IMR-90 (cell line): ENCODE measurements at regions of chr10 and their contacts with region 1.

Region 1: GRCh38 chr10:26725837-26726727 is 28.6 kb downstream of the PDSS1 start:
- DNase-seq: peak; percentile 67
- ATAC-seq: peak; percentile 81
- H3K4me3 ChIP-seq: no peak overlapping the region
- H3K27ac ChIP-seq: no peak overlapping the region
- H3K4me1 ChIP-seq: no peaks in the 10 kb centered on the region
- H3K27me3 ChIP-seq: no peaks in the 10 kb centered on the region
- CTCF ChIP-seq: peak; percentile 84
- POLR2A ChIP-seq: no peak
- RAD21 ChIP-seq: peak; percentile 85

Region 2: DNA sequence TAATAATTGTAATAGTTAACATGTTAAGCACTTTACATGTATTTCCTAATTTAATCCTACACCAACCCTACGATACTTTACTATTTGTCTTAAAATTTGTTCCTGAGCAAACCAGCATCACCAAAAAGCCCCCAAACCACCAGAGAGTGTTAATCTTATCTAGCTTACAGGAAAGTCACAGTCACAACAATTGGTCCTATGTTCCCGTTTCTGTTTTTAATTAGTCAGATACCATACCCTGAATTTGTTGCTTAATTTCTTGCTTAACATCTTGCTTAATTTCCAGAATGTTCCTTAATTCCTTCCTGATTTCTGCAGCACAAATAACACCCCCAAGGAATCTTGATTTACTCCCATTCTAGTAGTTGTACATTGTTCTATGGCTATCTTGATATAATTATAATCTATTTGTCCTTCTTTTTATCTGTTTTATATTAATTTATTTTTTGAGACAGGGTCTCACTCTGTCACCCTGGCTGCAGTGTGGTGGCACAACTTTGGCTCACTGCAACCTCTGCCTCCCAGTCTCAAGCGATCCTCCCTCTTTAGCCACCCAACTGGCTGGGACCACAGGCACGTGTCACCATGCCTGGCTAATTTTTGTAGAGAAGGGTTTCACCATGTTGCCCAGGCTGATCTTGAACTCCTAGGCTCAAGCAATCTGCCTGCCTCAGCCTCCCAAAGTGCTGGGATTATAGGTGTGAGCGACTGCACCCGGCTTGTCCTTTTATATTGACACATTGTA is 35.2 kb before region 1 on chr10:
- CTCF ChIA-PET with region 1: no interaction called
- POLR2A ChIA-PET with region 1: no interaction called
- dilution Hi-C with region 1: no loop called
- in situ Hi-C with region 1: no loop called
- intact Hi-C with region 1: no loop called
- DNase-seq: no peak
- ATAC-seq: no peak
- H3K4me3 ChIP-seq: no peak overlapping the region
- H3K27ac ChIP-seq: no peak overlapping the region
- H3K4me1 ChIP-seq: no peaks in the 10 kb centered on the region
- H3K27me3 ChIP-seq: no peaks in the 10 kb centered on the region
- CTCF ChIP-seq: no peak
- POLR2A ChIP-seq: no peak
- RAD21 ChIP-seq: no peak

Region 3: GRCh38 chr10:26706206-26706605 is 19.9 kb before region 1 on chr10:
- CTCF ChIA-PET with region 1: interaction called, 10 read pairs
- POLR2A ChIA-PET with region 1: no interaction called
- dilution Hi-C with region 1: no loop called
- in situ Hi-C with region 1: no loop called
- intact Hi-C with region 1: no loop called
- DNase-seq: no peak
- ATAC-seq: no peak
- H3K4me3 ChIP-seq: no peak overlapping the region
- H3K27ac ChIP-seq: no peak overlapping the region
- H3K4me1 ChIP-seq: no peaks in the 10 kb centered on the region
- H3K27me3 ChIP-seq: no peaks in the 10 kb centered on the region
- CTCF ChIP-seq: no peak
- POLR2A ChIP-seq: no peak
- RAD21 ChIP-seq: no peak

Region 4: GRCh38 chr10:26755443-26755903 is 29.4 kb after region 1 on chr10:
- CTCF ChIA-PET with region 1: interaction called, 6 read pairs
- POLR2A ChIA-PET with region 1: no interaction called
- dilution Hi-C with region 1: no loop called
- in situ Hi-C with region 1: no loop called
- intact Hi-C with region 1: loop called (anchors 1 kb)
- DNase-seq: peak; percentile 65
- ATAC-seq: no peak; the same call in 1 of the 2 replicates
- H3K4me3 ChIP-seq: no peak overlapping the region
- H3K27ac ChIP-seq: peak overlapping the region; percentile 81; the same call in 1 of the 2 replicates
- H3K4me1 ChIP-seq: peaks cover 3% of the 10 kb centered on the region
- H3K27me3 ChIP-seq: no peaks in the 10 kb centered on the region
- CTCF ChIP-seq: no peak
- POLR2A ChIP-seq: no peak
- RAD21 ChIP-seq: no peak

Region 5: DNA sequence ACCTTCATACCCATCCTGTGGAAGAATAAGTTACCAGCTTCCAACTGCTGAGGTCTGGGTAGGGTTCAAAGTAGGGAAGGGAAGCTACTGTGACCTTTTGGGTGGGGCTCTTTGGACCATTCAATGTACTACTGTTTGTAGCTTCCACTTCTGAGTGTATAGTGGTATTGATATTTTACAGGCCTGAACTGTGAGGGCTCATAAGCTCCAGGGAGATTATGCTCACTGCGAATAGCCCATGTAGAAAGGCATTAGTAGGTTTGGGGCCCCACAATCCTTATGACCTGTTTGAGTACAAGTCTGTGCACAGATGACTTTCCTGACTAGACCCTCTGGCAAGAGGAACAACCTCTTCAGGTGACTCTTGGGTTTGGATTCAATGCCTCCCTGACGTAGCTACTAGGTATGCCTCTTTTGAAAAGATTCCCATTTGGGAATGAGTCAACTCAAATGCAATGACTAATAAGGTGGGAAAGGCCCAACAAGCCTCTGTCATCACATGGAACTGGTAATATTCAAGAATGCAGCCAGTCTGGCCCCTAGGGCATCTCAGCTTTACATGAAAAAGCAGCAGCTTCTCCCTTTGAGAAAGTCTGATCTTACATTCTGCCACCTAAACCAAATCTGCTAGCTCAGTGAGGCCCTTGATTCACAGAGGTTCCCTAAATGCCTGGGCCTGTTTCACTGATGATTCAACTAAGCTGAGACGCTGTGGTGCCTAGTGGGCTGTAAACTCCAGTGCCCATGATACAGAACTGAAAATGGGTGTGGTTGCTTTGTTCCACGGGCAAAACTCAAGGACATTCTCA is 54.9 kb after region 1 on chr10:
- CTCF ChIA-PET with region 1: interaction called, 10 read pairs
- POLR2A ChIA-PET with region 1: no interaction called
- dilution Hi-C with region 1: no loop called
- in situ Hi-C with region 1: no loop called
- intact Hi-C with region 1: no loop called
- DNase-seq: peak; percentile 95
- ATAC-seq: peak; percentile 87
- H3K4me3 ChIP-seq: no peak overlapping the region
- H3K27ac ChIP-seq: peak overlapping the region; percentile 14; the same call in 1 of the 2 replicates
- H3K4me1 ChIP-seq: peaks cover 8% of the 10 kb centered on the region
- H3K27me3 ChIP-seq: no peaks in the 10 kb centered on the region
- CTCF ChIP-seq: no peak
- POLR2A ChIP-seq: no peak
- RAD21 ChIP-seq: no peak

Region 6: DNA sequence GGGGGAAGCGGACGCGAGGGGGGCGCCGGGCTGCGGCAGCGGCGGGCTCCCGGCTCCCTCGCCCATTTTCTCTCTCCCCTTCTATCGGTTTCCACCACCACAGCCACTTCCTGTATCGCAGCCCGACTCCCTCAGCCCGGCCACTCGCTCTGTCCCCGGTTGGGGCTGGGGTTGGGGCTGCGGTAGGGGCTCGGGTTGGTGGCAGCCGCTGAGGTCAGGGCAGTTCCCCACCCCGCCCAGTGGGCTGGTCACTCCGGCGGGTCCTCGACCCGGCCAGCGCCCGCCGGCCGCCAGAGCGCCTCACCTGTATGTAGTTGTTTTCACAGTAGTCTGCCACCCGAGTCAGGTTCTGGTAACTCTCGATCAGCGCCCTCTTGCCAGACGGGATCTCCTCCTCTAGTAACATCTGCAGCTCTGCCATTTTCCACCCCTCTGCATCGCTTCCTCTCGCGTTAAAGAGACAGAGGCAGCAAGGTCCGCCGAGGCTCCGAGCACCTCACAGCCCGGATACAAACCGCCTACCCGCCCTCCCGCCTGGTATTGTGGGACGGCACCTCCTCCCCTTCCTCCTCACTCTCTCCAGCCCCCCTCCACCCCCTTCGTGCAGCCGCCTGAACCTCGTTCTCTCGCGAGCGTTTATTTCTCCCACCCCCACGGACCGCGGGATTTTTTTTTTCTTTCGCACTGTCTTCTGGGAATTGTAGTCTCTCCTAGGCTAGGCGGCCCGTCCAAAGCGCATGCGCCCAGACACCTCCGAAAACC is 134.5 kb after region 1 on chr10 and contains the start of gene ABI1:
- CTCF ChIA-PET with region 1: interaction called, 11 read pairs
- POLR2A ChIA-PET with region 1: interaction called, 9 read pairs
- dilution Hi-C with region 1: no loop called
- in situ Hi-C with region 1: no loop called
- intact Hi-C with region 1: loop called (anchors 1 kb)
- DNase-seq: peak; percentile 98
- ATAC-seq: peak; percentile 92
- H3K4me3 ChIP-seq: peak within 1 kb of the TSS; percentile 86
- H3K27ac ChIP-seq: peak within 1 kb of the TSS; percentile 83
- H3K4me1 ChIP-seq: 0 out of 2 replicates have a peak, but pooled peaks cover 2% of the 10 kb centered on the region
- H3K27me3 ChIP-seq: peaks cover 5% of the 10 kb centered on the region
- CTCF ChIP-seq: no peak
- POLR2A ChIP-seq: peak; percentile 86
- RAD21 ChIP-seq: no peak
- total RNA-seq, gene ABI1: 60.8 and 71.3 TPM in 2 replicates

Region 7: GRCh38 chr10:26881600-26882331 is 155.7 kb after region 1 on chr10:
- CTCF ChIA-PET with region 1: interaction called, 44 read pairs
- POLR2A ChIA-PET with region 1: no interaction called
- dilution Hi-C with region 1: no loop called
- in situ Hi-C with region 1: loop called (anchors 5 kb)
- intact Hi-C with region 1: loop called (anchors 1 kb)
- DNase-seq: peak; percentile 76
- ATAC-seq: peak; percentile 91
- H3K4me3 ChIP-seq: no peak overlapping the region
- H3K27ac ChIP-seq: no peak overlapping the region
- H3K4me1 ChIP-seq: no peaks in the 10 kb centered on the region; the same call in 1 of the 2 replicates
- H3K27me3 ChIP-seq: peaks cover 9% of the 10 kb centered on the region
- CTCF ChIP-seq: peak; percentile 91
- POLR2A ChIP-seq: no peak
- RAD21 ChIP-seq: peak; percentile 91